ENCODE measurements at regions of chr1 and their contacts with region 1.

Region 1: GRCh38 chr1:61043010-61043820 is 39.1 kb upstream of the NFIA start:
- DNase-seq: peak; percentile 78 to 84
- ATAC-seq: peak; percentile 93 to 94
- H3K4me3 ChIP-seq: peak overlapping the region; percentile 62 to 87 (median 84)
- H3K27ac ChIP-seq: peak overlapping the region; percentile 71 to 92 (median 90)
- H3K4me1 ChIP-seq: no peaks in the 10 kb centered on the region
- H3K27me3 ChIP-seq: no peaks in the 10 kb centered on the region
- CTCF ChIP-seq: peak; percentile 87 to 94 (median 92)
- POLR2A ChIP-seq: no peak

Region 2: DNA sequence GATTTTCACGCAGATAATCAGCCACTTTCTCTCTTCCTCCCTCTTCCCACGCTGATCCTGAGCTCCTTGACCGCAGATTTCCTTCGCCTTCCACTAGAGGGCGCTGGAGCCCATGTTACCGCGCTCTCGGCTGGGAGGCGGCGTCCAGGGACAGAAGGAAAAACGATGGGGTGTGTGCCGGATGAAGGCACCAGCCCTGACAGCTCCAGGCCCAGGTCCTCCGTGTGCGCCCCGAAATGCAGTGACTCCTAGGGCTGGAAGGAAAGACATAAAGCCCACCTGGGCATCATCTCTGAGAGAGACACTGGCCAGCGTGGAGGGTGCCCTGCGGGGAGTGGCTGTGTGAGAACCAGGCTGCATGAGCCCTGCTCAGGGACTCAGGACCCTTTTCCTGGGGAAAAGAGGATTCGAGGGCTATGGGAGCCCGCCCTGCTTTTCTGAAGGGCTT is 1071.7 kb before region 1 on chr1:
- in situ Hi-C with region 1: loop called in 3 of 4 experiments (anchors 25 kb)
- intact Hi-C with region 1: loop called (anchors 2 kb)
- DNase-seq: peak; percentile 6 to 44
- ATAC-seq: peak; percentile 80 to 90
- H3K4me3 ChIP-seq: no peak overlapping the region
- H3K27ac ChIP-seq: no peak overlapping the region
- H3K4me1 ChIP-seq: peaks cover 8 to 11% of the 10 kb centered on the region in 2 donors
- H3K27me3 ChIP-seq: no peaks in the 10 kb centered on the region
- CTCF ChIP-seq: peak; percentile 51 to 90 (median 81)
- POLR2A ChIP-seq: no peak

Region 3: DNA sequence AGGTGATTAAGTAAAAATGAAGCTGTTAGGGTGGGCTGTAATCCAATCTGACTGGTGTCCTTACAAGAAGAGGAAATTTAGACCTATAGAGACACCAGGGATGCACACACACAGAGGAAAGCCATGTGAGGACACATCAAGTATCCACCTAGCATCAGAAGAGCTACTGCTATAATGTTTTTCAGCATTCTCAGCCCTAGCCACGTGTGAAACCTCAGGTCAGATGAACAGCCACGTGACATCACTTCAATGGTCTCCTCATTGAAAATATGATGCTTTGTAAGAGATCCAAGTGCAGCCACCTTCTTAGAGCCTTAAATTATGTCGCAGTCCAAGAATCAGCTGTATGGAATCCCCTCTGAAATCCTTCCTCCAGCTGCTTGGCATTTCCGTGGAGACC is 1034.7 kb before region 1 on chr1:
- in situ Hi-C with region 1: no loop called
- intact Hi-C with region 1: no loop called
- DNase-seq: no peak
- ATAC-seq: no peak
- H3K4me3 ChIP-seq: no peak overlapping the region
- H3K27ac ChIP-seq: no peak overlapping the region
- H3K4me1 ChIP-seq: no peaks in the 10 kb centered on the region
- H3K27me3 ChIP-seq: no peaks in the 10 kb centered on the region
- CTCF ChIP-seq: no peak
- POLR2A ChIP-seq: no peak

Region 4: DNA sequence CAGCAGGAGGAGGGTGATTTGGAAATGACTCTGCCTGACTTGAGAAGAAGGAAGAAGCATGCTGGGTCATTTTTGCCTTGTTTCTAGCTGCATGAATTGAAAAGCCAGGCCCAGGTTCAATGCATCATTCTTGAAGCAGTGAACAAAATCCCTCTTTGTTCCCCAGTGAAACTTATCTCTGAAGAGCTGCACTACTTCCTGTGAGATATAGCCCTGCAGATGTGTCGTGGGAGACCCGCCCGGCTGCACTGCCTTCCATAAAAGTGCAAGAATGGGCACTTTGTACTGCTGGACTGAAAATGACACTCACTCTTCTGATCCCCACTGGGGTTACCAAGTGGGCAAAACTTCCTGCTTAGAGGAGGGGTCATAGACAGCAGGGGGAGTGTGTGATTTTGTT is 210.0 kb before region 1 on chr1:
- in situ Hi-C with region 1: no loop called
- intact Hi-C with region 1: no loop called
- DNase-seq: no peak
- ATAC-seq: no peak
- H3K4me3 ChIP-seq: no peak overlapping the region
- H3K27ac ChIP-seq: no peak overlapping the region
- H3K4me1 ChIP-seq: no peaks in the 10 kb centered on the region
- H3K27me3 ChIP-seq: no peaks in the 10 kb centered on the region
- CTCF ChIP-seq: no peak
- POLR2A ChIP-seq: no peak

Region 5: DNA sequence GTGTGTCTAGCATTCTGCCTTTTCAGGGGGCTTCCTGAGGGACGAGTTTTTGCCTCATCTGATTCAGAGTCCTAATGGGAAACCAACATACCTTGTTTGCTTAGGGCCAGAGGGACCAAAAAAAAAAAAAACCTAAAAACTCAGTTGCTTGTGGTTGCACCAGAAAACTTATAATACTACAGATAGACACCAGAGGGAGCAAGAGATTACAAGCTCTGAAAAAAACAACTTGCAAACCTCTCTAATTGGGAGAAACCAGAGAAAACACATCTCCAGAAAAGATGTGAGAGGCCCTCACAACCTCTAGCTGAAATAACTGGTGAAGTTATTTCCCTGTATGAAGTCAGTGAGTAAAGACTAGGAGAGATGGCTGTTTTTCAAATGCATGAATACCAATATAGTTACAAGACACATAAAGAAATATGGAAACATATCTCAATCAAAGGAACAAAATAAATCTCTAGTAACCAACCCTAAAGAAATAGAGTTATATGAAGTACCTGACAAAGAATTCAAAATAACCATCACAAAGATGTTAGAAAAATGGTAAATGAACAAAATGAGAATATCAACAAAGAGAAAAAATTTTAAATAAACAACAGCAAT is 194.5 kb before region 1 on chr1:
- in situ Hi-C with region 1: loop called (anchors 5 to 10 kb)
- intact Hi-C with region 1: loop called (anchors 1 kb)
- DNase-seq: no peak
- ATAC-seq: no peak
- H3K4me3 ChIP-seq: no peak overlapping the region
- H3K27ac ChIP-seq: no peak overlapping the region
- H3K4me1 ChIP-seq: no peaks in the 10 kb centered on the region
- H3K27me3 ChIP-seq: no peaks in the 10 kb centered on the region
- CTCF ChIP-seq: peak; percentile 51 to 63 (median 57)
- POLR2A ChIP-seq: no peak

Region 6: DNA sequence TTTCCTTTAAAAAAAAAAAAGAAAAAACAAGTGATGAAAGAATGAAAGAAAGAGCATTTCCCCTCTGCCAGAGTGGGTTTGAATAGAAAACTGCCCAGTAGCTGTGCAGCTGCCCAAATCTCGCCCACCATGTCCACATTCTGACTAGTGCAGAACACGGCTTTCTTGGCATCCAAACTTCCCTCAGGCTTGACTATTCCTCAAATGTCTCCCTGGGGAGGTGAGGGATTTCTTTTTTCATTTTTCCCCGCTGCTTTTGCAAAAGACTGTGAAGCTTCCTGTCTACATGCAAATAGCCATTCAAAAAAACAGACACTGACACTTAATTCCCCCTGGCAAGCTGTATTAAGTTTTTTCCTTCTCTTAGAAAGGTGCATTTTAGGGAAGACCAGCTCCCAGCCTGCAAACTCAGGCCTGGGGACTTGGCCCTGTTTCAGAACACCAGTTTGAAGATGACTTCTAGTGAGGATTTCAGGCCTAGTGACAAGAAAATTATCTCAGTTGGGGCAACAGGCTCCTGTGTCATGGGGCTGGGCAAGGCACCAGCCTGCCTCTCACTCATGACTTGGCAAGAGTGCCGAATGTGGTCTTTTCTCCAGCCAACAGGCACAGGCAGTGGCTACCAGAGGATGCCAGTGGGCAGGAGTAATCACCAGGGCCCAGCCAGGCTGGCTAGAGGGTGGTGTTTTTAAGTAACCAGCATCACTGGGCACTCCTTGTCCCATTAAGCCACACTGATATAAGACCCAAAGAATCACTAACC is 138.9 kb before region 1 on chr1:
- in situ Hi-C with region 1: no loop called
- intact Hi-C with region 1: loop called (anchors 2 kb)
- DNase-seq: peak; percentile 80 to 93
- ATAC-seq: peak; percentile 86 to 89
- H3K4me3 ChIP-seq: no peak overlapping the region
- H3K27ac ChIP-seq: peak overlapping the region; percentile 87 to 90 (median 88)
- H3K4me1 ChIP-seq: peaks cover 42 to 51% of the 10 kb centered on the region in 2 donors
- H3K27me3 ChIP-seq: no peaks in the 10 kb centered on the region
- CTCF ChIP-seq: no peak
- POLR2A ChIP-seq: no peak

Region 7: GRCh38 chr1:60969971-60970509 is 73.2 kb before region 1 on chr1:
- in situ Hi-C with region 1: loop called in 1 of 4 experiments (anchors 5 kb)
- intact Hi-C with region 1: loop called (anchors 2 kb)
- DNase-seq: no peak
- ATAC-seq: peak; percentile 58 to 73
- H3K4me3 ChIP-seq: no peak overlapping the region
- H3K27ac ChIP-seq: no peak overlapping the region
- H3K4me1 ChIP-seq: peaks cover 9 to 11% of the 10 kb centered on the region in 2 donors
- H3K27me3 ChIP-seq: no peaks in the 10 kb centered on the region
- CTCF ChIP-seq: peak; percentile 28 to 59 (median 40)
- POLR2A ChIP-seq: no peak